ENCODE measurements at regions of chr3 and their contacts with region 1.

Region 1: GRCh38 chr3:45688882-45689756 is at the start of gene SACM1L:
- DNase-seq: peak; percentile 97
- H3K4me3 Mint-ChIP-seq: peak within 1 kb of the TSS; percentile 81
- H3K27ac Mint-ChIP-seq: peak within 1 kb of the TSS; percentile 94
- H3K4me1 Mint-ChIP-seq: peaks cover 51% of the 10 kb centered on the region
- H3K27me3 Mint-ChIP-seq: peaks cover 3% of the 10 kb centered on the region
- total RNA-seq, gene SACM1L: 57.6 to 61.3 TPM

Region 2: GRCh38 chr3:45100981-45101407 is 588.1 kb before region 1 on chr3:
- CTCF ChIA-PET with region 1: no interaction called
- POLR2A ChIA-PET with region 1: no interaction called
- DNase-seq: no peak
- H3K4me3 Mint-ChIP-seq: no peak overlapping the region
- H3K27ac Mint-ChIP-seq: no peak overlapping the region
- H3K4me1 Mint-ChIP-seq: peaks cover 47% of the 10 kb centered on the region
- H3K27me3 Mint-ChIP-seq: peaks cover 33% of the 10 kb centered on the region

Region 3: DNA sequence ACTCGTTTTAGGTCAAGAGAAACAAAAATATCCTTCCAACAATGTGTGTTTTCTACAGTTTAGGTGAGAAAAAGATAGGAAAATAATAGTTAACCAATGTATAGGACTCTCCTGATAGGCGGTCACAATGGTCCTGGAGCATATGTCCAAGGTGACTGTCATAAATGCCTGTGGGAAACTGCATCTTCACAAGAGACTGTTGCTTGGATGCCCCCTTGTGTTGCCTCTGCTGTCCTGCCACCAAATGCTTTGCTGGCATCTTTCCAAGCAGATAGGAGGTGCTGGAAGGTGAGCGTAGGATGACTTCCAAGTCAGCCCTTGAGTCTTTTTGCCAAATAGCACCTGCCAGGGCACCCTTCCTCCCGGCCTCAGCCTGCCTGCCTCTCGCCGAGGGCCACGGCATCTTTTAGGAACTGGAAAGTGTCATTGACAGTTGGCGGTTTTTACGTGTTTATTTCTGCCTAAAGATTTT is 24.0 kb before region 1 on chr3:
- CTCF ChIA-PET with region 1: interaction called, 10 read pairs
- POLR2A ChIA-PET with region 1: interaction called, 3 read pairs
- DNase-seq: peak; percentile 68
- H3K4me3 Mint-ChIP-seq: peak overlapping the region; percentile 74
- H3K27ac Mint-ChIP-seq: peak overlapping the region; percentile 88
- H3K4me1 Mint-ChIP-seq: peaks cover 49% of the 10 kb centered on the region
- H3K27me3 Mint-ChIP-seq: no peaks in the 10 kb centered on the region

Region 4: DNA sequence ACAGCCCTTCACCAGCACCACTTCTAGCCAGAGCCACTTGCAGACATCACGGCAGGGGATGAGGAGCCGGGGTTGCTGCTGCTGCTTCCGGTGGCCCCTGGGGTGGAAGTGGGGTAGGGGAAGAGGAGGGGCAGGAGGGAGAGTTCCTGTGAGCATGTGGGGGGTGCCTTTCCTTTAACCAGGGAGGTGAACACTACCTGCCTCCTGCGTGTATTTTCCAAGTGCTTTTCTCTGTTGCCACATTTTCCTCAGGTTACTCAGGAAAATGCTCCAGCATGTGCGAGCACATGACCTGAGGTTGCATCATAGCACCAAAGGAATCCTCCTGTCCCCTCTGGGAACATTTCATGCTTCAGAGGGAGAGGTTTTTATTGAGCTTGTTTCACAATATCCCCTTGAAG is 12.1 kb before region 1 on chr3:
- CTCF ChIA-PET with region 1: interaction called, 11 read pairs
- POLR2A ChIA-PET with region 1: interaction called, 3 read pairs
- DNase-seq: peak; percentile 66
- H3K4me3 Mint-ChIP-seq: peak overlapping the region; percentile 63
- H3K27ac Mint-ChIP-seq: peak overlapping the region; percentile 95
- H3K4me1 Mint-ChIP-seq: peaks cover 41% of the 10 kb centered on the region
- H3K27me3 Mint-ChIP-seq: no peaks in the 10 kb centered on the region

Region 5: GRCh38 chr3:45730409-45731154 is 41.5 kb after region 1 on chr3:
- CTCF ChIA-PET with region 1: no interaction called
- POLR2A ChIA-PET with region 1: no interaction called
- DNase-seq: no peak
- H3K4me3 Mint-ChIP-seq: no peak overlapping the region
- H3K27ac Mint-ChIP-seq: no peak overlapping the region
- H3K4me1 Mint-ChIP-seq: peaks cover 3% of the 10 kb centered on the region
- H3K27me3 Mint-ChIP-seq: no peaks in the 10 kb centered on the region

Measured in activated CD4-positive, alpha-beta T cell treated with anti-CD3 and anti-CD28 coated beads, Interleukin-2, amount 10 ng/mL, durations not matched to agents 7 days and 5 days (primary cell).